ENCODE measurements at regions of chr6 and their contacts with region 1.

Region 1: GRCh38 chr6:49570474-49571079 is 20.1 kb downstream of the C6orf141 start:
- DNase-seq: no peak
- H3K4me3 ChIP-seq: no peak overlapping the region
- H3K4me3 Mint-ChIP-seq: no peak overlapping the region
- H3K27ac Mint-ChIP-seq: no peak overlapping the region
- H3K4me1 ChIP-seq: peaks cover 5% of the 10 kb centered on the region; the same call in 1 of the 2 replicates
- H3K4me1 Mint-ChIP-seq: peaks cover 9% of the 10 kb centered on the region
- H3K27me3 ChIP-seq: no peaks in the 10 kb centered on the region
- H3K27me3 Mint-ChIP-seq: no peaks in the 10 kb centered on the region
- CTCF ChIP-seq: no peak

Region 2: GRCh38 chr6:49531774-49532569 is 38.6 kb before region 1 on chr6:
- CTCF ChIA-PET with region 1: no interaction called
- POLR2A ChIA-PET with region 1: no interaction called
- intact Hi-C with region 1: loop called (anchors 5 kb)
- DNase-seq: peak in 1 of 2 experiments; percentile 32
- H3K4me3 ChIP-seq: no peak overlapping the region
- H3K4me3 Mint-ChIP-seq: no peak overlapping the region
- H3K27ac Mint-ChIP-seq: no peak overlapping the region
- H3K4me1 ChIP-seq: no peaks in the 10 kb centered on the region
- H3K4me1 Mint-ChIP-seq: no peaks in the 10 kb centered on the region
- H3K27me3 ChIP-seq: no peaks in the 10 kb centered on the region
- H3K27me3 Mint-ChIP-seq: no peaks in the 10 kb centered on the region
- CTCF ChIP-seq: peak; percentile 80 to 82

Measured in Caco-2 (cell line).